Activated naive CD4-positive, alpha-beta T cell treated with anti-CD3 and anti-CD28 coated beads for 36 hours (primary cell): ENCODE measurements at regions of chr2 and their contacts with region 1.

Region 1: GRCh38 chr2:24075915-24076848 is at the start of gene SF3B6:
- DNase-seq: peak; percentile 100
- H3K4me3 Mint-ChIP-seq: peak within 1 kb of the TSS; percentile 97
- H3K27ac Mint-ChIP-seq: peak within 1 kb of the TSS; percentile 93
- H3K4me1 Mint-ChIP-seq: peaks cover 36% of the 10 kb centered on the region
- H3K27me3 Mint-ChIP-seq: no peaks in the 10 kb centered on the region
- total RNA-seq, gene SF3B6: 151 to 164 TPM

Region 2: GRCh38 chr2:23824777-23825212 is 251.4 kb before region 1 on chr2:
- CTCF ChIA-PET with region 1: interaction called, 4 read pairs
- intact Hi-C with region 1: loop called (anchors 2 kb)
- DNase-seq: peak; percentile 41
- H3K4me3 Mint-ChIP-seq: no peak overlapping the region
- H3K27ac Mint-ChIP-seq: no peak overlapping the region
- H3K4me1 Mint-ChIP-seq: peaks cover 5% of the 10 kb centered on the region
- H3K27me3 Mint-ChIP-seq: no peaks in the 10 kb centered on the region

Region 3: GRCh38 chr2:24046930-24047702 is 29.1 kb before region 1 on chr2 and contains the start of gene WDCP:
- CTCF ChIA-PET with region 1: interaction called, 4 read pairs
- intact Hi-C with region 1: loop called (anchors 1 kb)
- DNase-seq: peak; percentile 98
- H3K4me3 Mint-ChIP-seq: peak within 1 kb of the TSS; percentile 95
- H3K27ac Mint-ChIP-seq: peak within 1 kb of the TSS; percentile 80
- H3K4me1 Mint-ChIP-seq: peaks cover 22% of the 10 kb centered on the region
- H3K27me3 Mint-ChIP-seq: peaks cover 7% of the 10 kb centered on the region
- total RNA-seq, gene WDCP: 17.6 to 21.1 TPM

Region 4: DNA sequence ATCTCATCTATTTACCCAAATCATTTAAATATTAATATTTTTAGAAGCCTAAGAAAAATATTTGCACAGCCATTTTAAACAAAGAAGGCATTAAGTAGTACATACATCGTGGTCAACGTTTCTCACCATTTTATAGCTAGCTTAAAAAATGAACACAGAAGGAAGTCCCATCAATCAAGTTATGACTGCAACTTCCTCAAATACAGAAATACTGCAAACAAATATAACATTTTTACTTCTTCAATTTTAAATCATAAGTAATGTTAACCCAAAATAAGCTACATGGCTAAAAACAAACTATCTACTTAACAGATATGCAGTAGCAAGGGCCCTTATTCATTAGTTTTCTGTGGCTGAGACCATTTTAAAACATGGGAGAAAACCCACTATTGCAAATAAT is 253.5 kb after region 1 on chr2:
- CTCF ChIA-PET with region 1: no interaction called
- intact Hi-C with region 1: no loop called
- DNase-seq: no peak
- H3K4me3 Mint-ChIP-seq: no peak overlapping the region
- H3K27ac Mint-ChIP-seq: no peak overlapping the region
- H3K4me1 Mint-ChIP-seq: peaks cover 36% of the 10 kb centered on the region
- H3K27me3 Mint-ChIP-seq: no peaks in the 10 kb centered on the region

Region 5: GRCh38 chr2:24360050-24360962 is 284.1 kb after region 1 on chr2 and contains the start of gene ITSN2:
- CTCF ChIA-PET with region 1: no interaction called
- intact Hi-C with region 1: loop called (anchors 2 kb)
- DNase-seq: peak; percentile 84
- H3K4me3 Mint-ChIP-seq: peak within 1 kb of the TSS; percentile 82
- H3K27ac Mint-ChIP-seq: peak within 1 kb of the TSS; percentile 88
- H3K4me1 Mint-ChIP-seq: peaks cover 25% of the 10 kb centered on the region
- H3K27me3 Mint-ChIP-seq: no peaks in the 10 kb centered on the region
- total RNA-seq, gene ITSN2: 46.1 to 46.7 TPM

Region 6: DNA sequence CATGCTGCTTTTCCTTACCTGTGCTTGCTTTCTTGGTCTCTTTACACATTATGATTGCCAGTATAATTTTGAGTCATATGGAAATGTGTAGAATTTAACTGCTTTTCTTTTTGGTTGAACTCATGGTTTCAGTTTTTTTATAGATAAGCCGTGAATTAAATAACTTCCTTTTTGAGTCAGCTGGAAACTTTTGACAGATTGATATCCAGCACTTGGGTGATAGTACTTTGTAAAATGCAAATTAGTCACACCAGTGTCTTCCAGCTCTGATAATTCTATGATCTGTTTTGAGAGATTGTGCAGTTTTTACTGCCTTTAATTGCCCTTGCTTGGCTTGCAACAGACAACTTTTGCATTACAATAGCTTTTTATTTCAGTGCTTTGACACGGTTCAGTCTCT is 501.3 kb after region 1 on chr2:
- CTCF ChIA-PET with region 1: no interaction called
- intact Hi-C with region 1: loop called (anchors 5 kb)
- DNase-seq: no peak
- H3K4me3 Mint-ChIP-seq: no peak overlapping the region
- H3K27ac Mint-ChIP-seq: peak overlapping the region; percentile 69
- H3K4me1 Mint-ChIP-seq: peaks cover 74% of the 10 kb centered on the region
- H3K27me3 Mint-ChIP-seq: no peaks in the 10 kb centered on the region

Region 7: GRCh38 chr2:25041928-25042320 is 965.7 kb after region 1 on chr2 and contains the start of gene EFR3B:
- CTCF ChIA-PET with region 1: no interaction called
- intact Hi-C with region 1: loop called (anchors 5 kb)
- DNase-seq: peak; percentile 92
- H3K4me3 Mint-ChIP-seq: peak within 1 kb of the TSS; percentile 77
- H3K27ac Mint-ChIP-seq: no peak within 1 kb of the TSS
- H3K4me1 Mint-ChIP-seq: peaks cover 29% of the 10 kb centered on the region
- H3K27me3 Mint-ChIP-seq: peaks cover 36% of the 10 kb centered on the region
- total RNA-seq, gene EFR3B: 0.41 to 0.42 TPM